Gastrocnemius medialis (tissue), 4 donors: ENCODE measurements at regions of chr9 and their contacts with region 1.

Region 1: DNA sequence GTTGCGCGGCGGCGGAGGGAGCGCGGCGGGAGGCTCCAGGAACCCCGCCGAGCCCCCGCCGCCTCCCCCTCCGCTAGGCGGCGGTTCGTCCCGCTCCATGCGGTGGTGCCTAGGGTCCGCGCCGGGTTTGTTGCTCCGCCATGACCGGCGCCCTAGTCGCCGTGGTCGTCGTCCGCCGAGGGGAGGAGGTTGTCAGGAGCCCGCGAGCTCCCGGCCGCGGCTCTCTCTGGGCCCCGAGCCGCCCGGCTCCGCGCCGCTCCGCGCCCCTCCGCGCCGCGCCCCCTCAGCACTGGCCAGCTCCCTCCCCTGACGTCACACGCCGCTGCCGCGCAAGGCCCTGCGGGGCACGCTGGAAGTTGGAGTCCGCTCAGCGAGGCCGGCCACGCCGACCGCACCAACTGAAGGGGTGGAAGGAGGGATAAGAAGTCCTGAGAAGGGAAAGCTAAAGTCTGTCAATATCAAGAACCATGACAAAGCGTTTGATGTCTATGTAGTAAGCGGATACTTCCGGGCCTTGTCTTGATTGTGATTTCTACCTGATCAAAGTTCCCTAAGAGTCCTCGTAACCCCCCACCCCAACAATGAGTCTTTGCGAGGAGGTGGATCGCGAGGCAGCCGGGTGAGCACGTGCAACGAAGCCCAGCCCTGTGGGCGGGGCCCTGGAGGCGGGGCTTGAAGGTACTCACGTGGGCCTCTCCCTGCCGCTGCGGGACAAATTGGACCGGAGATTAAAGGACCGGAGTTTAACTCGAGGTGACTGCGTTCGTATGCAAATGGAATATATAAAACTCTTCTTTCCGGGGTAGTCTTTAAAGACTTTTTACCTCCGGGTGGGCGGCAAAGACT is at the start of gene NR6A1:
- DNase-seq: peak; percentile 94 to 96
- ATAC-seq: peak; percentile 87 to 93
- H3K4me3 ChIP-seq: peak within 1 kb of the TSS; percentile 61 to 77 (median 72)
- H3K27ac ChIP-seq: peak within 1 kb of the TSS; percentile 77 to 87 (median 80)
- H3K4me1 ChIP-seq: peaks cover 17 to 20% of the 10 kb centered on the region in 2 donors
- H3K27me3 ChIP-seq: peaks cover 8 to 32% (median 14%) of the 10 kb centered on the region in 3 donors
- CTCF ChIP-seq: peak in 4 of 5 experiments; percentile 37 to 61 (median 47)
- POLR2A ChIP-seq: peak; percentile 69 to 84
- total RNA-seq, gene NR6A1: 0.58 to 5.6 (median 2.1) TPM

Region 2: DNA sequence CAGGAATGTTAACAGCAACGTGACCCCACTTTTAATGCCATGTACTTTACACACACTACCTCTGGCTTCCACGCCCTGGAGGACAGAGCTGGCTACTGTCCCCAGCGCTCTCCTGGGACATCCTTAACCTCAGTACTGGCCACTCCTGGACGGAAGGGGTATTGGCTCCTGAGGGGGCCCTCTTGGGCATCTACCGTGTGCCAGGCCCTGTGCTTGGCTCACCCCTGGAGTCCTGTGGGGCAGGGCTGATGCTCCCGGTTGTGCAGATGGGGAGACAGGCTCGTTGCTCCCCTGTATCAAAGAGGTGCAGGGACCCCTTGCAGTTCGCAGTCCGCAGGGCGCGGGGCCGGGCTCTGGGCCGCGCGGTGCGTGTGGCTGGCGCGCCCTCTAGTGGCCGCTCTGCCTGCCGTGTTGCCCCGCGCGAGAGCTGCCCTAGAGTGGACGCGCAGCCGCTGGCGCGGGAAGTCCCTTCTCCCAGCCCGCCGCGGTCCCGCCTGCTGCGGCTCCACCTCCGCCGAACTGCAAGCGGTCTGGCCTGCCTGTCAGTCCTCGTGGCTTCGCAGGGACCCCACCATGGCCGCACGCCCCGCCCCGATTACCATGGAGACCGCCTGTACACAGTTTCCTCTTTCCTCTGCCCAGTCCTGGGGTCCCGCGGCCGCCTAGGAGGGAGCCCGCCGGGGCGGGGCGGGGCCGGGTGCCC is 81.7 kb after region 1 on chr9 and contains the start of gene WDR38:
- in situ Hi-C with region 1: loop called (anchors 5 kb)
- intact Hi-C with region 1: loop called (anchors 1 kb)
- DNase-seq: peak; percentile 88 to 94
- ATAC-seq: peak; percentile 86 to 88
- H3K4me3 ChIP-seq: peak within 1 kb of the TSS; percentile 35 to 59 (median 50)
- H3K27ac ChIP-seq: peak within 1 kb of the TSS; percentile 80 to 93 (median 90)
- H3K4me1 ChIP-seq: peaks cover 28 to 32% of the 10 kb centered on the region in 2 donors
- H3K27me3 ChIP-seq: no peaks in the 10 kb centered on the region
- CTCF ChIP-seq: peak; percentile 95 to 100 (median 100)
- POLR2A ChIP-seq: no peak
- total RNA-seq, gene WDR38: not detected

Region 3: GRCh38 chr9:125143375-125144090 is 372.3 kb after region 1 on chr9 and contains the start of gene SCAI:
- in situ Hi-C with region 1: loop called in 2 of 4 experiments (anchors 25 kb)
- intact Hi-C with region 1: loop called (anchors 5 kb)
- DNase-seq: peak; percentile 99
- ATAC-seq: peak; percentile 99 to 100
- H3K4me3 ChIP-seq: peak within 1 kb of the TSS; percentile 64 to 78 (median 76)
- H3K27ac ChIP-seq: peak within 1 kb of the TSS; percentile 61 to 81 (median 80)
- H3K4me1 ChIP-seq: peaks cover 10 to 15% of the 10 kb centered on the region in 2 donors
- H3K27me3 ChIP-seq: no peaks in the 10 kb centered on the region
- CTCF ChIP-seq: peak; percentile 98 to 100 (median 99)
- POLR2A ChIP-seq: no peak
- total RNA-seq, gene SCAI: 1.1 to 4.7 (median 3.4) TPM

Region 4: DNA sequence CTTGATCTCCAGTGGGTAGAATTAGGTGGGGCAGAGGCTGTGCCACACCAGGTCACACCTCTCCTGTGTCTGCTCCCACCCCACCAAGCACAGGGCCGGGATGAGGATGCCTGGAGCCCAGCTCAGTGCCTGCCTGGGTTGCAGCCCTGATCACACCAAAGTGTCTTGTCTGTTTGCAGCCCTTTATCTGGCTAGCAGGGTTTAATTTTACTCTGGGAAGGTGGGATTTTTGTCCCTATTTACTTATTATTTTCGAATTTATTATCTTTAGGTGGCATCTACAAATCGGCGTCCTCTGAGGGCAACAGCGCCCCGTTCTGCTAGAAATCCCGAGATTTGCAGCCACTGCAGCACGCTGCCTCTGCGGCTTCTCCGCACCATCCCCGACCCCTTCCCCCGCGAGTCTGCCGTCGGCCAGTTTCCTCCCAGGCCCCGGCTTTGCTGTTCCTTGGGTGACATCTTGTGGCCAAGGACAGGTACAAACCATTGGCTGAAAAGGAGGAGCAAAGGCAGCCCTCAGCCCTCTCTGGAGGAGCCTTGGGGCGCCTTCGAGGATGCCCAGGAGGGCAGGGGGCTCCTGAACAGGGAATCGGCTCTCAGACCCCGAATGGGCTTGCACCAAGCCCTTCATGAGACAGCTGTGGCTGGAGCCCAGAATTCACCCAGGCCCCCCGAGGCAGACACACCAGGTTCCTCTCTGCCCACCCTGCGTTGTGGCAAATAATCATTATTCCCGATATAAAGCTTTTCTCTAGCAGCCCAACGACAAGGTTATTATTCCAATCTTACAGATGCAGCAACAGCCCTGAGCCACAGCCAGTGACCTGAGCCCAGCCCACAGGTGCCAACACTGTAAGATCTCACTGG is 603.4 kb after region 1 on chr9:
- in situ Hi-C with region 1: loop called in 2 of 4 experiments (anchors 25 kb)
- intact Hi-C with region 1: loop called (anchors 2 kb)
- DNase-seq: peak; percentile 31 to 40
- ATAC-seq: peak; percentile 81 to 83
- H3K4me3 ChIP-seq: peak overlapping the region in 3 of 4 donors; percentile 25 to 42 (median 31)
- H3K27ac ChIP-seq: no peak overlapping the region
- H3K4me1 ChIP-seq: peaks cover 0 to 5% of the 10 kb centered on the region in 2 donors
- H3K27me3 ChIP-seq: no peaks in the 10 kb centered on the region
- CTCF ChIP-seq: peak; percentile 45 to 79 (median 62)
- POLR2A ChIP-seq: no peak